RWPE1 (cell line): ENCODE measurements at regions of chr1 and their contacts with region 1.

Region 1: GRCh38 chr1:241844593-241844992 is 3.4 kb upstream of the EXO1 start:
- DNase-seq: no peak
- H3K27ac ChIP-seq: no peak overlapping the region
- CTCF ChIP-seq: no peak

Region 2: GRCh38 chr1:241787691-241788090 is 56.9 kb before region 1 on chr1:
- CTCF ChIA-PET with region 1: interaction called, 11 read pairs
- POLR2A ChIA-PET with region 1: no interaction called
- DNase-seq: no peak
- H3K27ac ChIP-seq: no peak overlapping the region
- CTCF ChIP-seq: no peak

Region 3: DNA sequence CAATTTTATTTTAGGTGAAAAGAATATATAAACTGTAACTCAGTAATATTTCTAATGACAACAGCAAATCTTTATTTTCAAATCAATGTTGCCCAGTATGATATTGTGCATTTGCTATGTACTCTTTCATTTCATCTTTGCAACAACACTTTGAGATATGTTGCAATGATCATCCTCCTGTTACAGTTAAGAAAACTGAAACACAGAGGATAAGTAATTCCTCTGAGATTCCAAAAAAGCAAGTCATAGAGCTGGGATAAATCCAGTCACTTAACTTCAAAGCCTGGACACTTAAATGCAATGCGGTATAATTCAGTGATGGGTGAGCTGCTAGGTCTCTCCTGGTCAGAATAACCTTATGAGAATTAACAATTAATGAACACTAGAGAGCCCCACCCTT is 45.2 kb before region 1 on chr1:
- CTCF ChIA-PET with region 1: no interaction called
- POLR2A ChIA-PET with region 1: no interaction called
- DNase-seq: no peak
- H3K27ac ChIP-seq: no peak overlapping the region
- CTCF ChIP-seq: no peak